ENCODE measurements at regions of chr18 and their contacts with region 1.

Region 1: DNA sequence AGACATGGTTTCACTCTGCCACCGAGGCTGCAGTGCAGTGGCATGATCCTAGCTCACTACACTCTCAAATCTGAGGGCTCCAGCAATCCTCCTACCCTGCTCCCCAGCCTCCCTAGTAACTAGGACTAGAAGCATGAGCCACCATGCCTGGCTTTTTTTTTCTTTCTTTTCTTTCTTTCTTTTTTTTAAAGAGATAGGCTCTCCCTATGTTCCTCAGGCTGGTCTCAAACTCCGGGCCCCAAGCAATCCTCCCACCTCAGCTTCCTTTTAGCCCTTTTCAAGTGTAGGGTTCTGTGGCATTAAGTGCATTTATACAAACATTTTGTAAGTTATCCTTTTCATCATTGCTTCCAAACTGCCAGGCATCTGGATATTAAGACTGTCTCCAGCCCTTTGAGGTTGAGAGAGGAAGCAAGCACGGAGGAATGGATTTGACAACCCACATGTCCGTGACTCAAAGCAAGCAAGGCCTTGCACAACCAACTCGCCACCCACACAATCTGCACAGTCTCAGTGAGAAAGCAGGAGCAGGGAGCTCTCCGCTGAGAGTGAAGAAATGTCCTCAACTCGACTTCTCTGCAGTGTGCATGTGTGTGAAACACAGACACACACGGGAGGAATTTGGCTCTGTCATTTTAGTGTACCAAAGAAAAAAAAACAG is 65.6 kb downstream of the ATP8B1 start:
- DNase-seq: peak; percentile 93

Region 2: GRCh38 chr18:57715681-57716080 is 21.8 kb before region 1 on chr18:
- intact Hi-C with region 1: no loop called
- DNase-seq: no peak

Region 3: GRCh38 chr18:57776767-57777166 is 39.2 kb after region 1 on chr18:
- intact Hi-C with region 1: loop called in 1 of 2 experiments (anchors 1 kb)
- DNase-seq: no peak

Measured in posterior vena cava (tissue), 2 donors.